ENCODE measurements at regions of chr16 and their contacts with region 1.

Region 1: DNA sequence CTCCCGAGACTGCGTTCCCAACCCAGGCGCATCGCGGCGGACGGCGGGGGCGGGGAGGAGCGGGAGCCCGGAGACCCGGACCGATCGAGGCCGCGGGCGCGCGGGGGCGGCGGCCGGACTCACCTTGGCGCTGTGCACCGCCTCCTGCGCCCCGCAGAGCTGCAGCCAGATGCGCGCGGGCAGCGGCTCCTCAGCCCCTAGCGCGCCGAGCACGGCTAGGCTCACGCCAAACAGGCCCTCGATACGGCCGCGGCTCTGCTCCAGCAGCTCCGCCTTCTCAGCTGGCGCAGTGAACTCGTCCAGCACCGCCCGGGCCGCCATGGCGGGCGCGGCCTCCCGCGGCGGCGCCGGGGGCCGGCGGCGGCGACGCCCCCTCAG is 339 bp downstream of the N4BP1 start:
- DNase-seq: no peak
- H3K4me3 Mint-ChIP-seq: no peak overlapping the region
- H3K27ac Mint-ChIP-seq: peak overlapping the region; percentile 53
- H3K4me1 Mint-ChIP-seq: peaks cover 44% of the 10 kb centered on the region
- H3K27me3 Mint-ChIP-seq: no peaks in the 10 kb centered on the region

Region 2: GRCh38 chr16:48365581-48366164 is 244.0 kb before region 1 on chr16:
- CTCF ChIA-PET with region 1: interaction called, 4 read pairs
- POLR2A ChIA-PET with region 1: interaction called, 62 read pairs
- DNase-seq: peak; percentile 89
- H3K4me3 Mint-ChIP-seq: peak overlapping the region; percentile 90
- H3K27ac Mint-ChIP-seq: peak overlapping the region; percentile 99
- H3K4me1 Mint-ChIP-seq: peaks cover 56% of the 10 kb centered on the region
- H3K27me3 Mint-ChIP-seq: no peaks in the 10 kb centered on the region

Region 3: GRCh38 chr16:48385272-48386150 is 224.1 kb before region 1 on chr16 and contains the start of gene SIAH1:
- CTCF ChIA-PET with region 1: no interaction called
- POLR2A ChIA-PET with region 1: interaction called, 13 read pairs
- DNase-seq: peak; percentile 88
- H3K4me3 Mint-ChIP-seq: peak within 1 kb of the TSS; percentile 88
- H3K27ac Mint-ChIP-seq: peak within 1 kb of the TSS; percentile 85
- H3K4me1 Mint-ChIP-seq: peaks cover 22% of the 10 kb centered on the region
- H3K27me3 Mint-ChIP-seq: no peaks in the 10 kb centered on the region
- total RNA-seq, gene SIAH1: 16.1 to 16.5 TPM

Region 4: GRCh38 chr16:48556913-48557351 is 52.7 kb before region 1 on chr16:
- CTCF ChIA-PET with region 1: interaction called, 3 read pairs
- POLR2A ChIA-PET with region 1: interaction called, 10 read pairs
- DNase-seq: no peak
- H3K4me3 Mint-ChIP-seq: peak overlapping the region; percentile 5
- H3K27ac Mint-ChIP-seq: peak overlapping the region; percentile 63
- H3K4me1 Mint-ChIP-seq: peaks cover 78% of the 10 kb centered on the region
- H3K27me3 Mint-ChIP-seq: no peaks in the 10 kb centered on the region

Region 5: GRCh38 chr16:48632137-48632774 is 22.6 kb after region 1 on chr16:
- CTCF ChIA-PET with region 1: interaction called, 14 read pairs
- POLR2A ChIA-PET with region 1: interaction called, 5 read pairs
- DNase-seq: no peak
- H3K4me3 Mint-ChIP-seq: no peak overlapping the region
- H3K27ac Mint-ChIP-seq: no peak overlapping the region
- H3K4me1 Mint-ChIP-seq: peaks cover 12% of the 10 kb centered on the region
- H3K27me3 Mint-ChIP-seq: peaks cover 9% of the 10 kb centered on the region

Measured in activated CD4-positive, alpha-beta memory T cell treated with anti-CD3 and anti-CD28 coated beads, Interleukin-2, amount 10 ng/mL, durations not matched to agents 7 days and 5 days (primary cell).